K562 (cell line): ENCODE measurements at regions of chr16 and their contacts with region 1.

Region 1: GRCh38 chr16:1331712-1332617 is 1.5 kb upstream of the BAIAP3 start:
- DNase-seq: peak; percentile 74 to 91 (median 82)
- ATAC-seq: peak; percentile 81
- H3K4me3 ChIP-seq: peak overlapping the region; percentile 31
- H3K27ac ChIP-seq: peak overlapping the region; percentile 90
- H3K4me1 ChIP-seq: peaks cover 17 to 74% of the 10 kb centered on the region in 2 experiments
- H3K27me3 ChIP-seq: peaks cover 6 to 19% of the 10 kb centered on the region in 2 experiments; a peak in 3 of 5 replicates
- CTCF ChIP-seq: no peak
- EP300 ChIP-seq: peak; percentile 41
- POLR2A ChIP-seq: peak; percentile 70
- RAD21 ChIP-seq: no peak

Region 2: DNA sequence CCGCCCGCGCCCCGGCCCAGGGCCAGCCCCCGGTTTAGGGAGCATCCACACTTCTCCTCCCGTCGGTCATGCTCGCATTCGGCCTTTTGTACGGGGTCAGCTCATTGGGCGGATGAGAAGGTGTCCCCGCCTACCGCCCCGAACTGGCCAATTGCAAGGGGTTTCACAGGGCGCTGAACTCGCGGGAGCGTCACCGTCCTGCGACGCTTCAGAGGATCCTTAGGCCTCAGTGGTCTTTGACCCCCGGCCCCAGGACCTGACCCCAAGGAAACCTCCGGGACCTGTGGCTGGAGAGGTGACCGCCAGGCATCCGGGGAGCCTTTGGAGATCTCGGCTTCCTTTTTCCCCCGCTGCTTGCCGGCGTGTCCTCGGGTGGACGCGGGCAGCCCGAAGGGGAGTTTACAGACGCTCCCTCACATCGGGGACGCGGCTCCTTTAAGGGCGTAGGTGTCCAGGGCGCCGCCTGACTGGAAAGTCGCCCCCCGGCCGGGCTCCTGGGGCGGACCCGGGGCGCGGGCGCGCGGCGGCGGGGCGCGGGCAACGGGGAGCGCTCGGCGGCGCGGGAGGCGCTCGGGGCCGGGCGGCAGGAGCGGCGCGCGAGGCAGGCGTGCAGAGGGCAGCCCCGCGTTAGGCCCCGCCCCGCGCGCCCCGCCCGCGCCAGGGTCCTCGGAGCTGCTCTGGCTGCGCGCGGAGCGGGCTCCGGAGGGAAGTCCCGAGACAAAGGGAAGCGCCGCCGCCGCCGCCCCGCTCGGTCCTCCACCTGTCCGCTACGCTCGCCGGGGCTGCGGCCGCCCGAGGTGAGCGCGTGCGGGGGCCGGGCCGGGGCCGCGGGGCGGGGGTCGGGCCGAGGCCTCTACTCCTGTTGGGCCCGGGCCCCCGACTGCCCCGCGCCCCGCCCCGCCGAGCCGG is 22.7 kb before region 1 on chr16 and contains the start of gene UBE2I:
- CTCF ChIA-PET with region 1: no interaction called
- POLR2A ChIA-PET with region 1: interaction called, 15 read pairs
- in situ Hi-C with region 1: no loop called
- intact Hi-C with region 1: loop called (anchors 2 kb)
- DNase-seq: peak; percentile 75 to 98 (median 88)
- ATAC-seq: peak; percentile 84
- H3K4me3 ChIP-seq: peak within 1 kb of the TSS; percentile 91
- H3K27ac ChIP-seq: peak within 1 kb of the TSS; percentile 100
- H3K4me1 ChIP-seq: peaks cover 12 to 64% of the 10 kb centered on the region in 2 experiments
- H3K27me3 ChIP-seq: no peaks in the 10 kb centered on the region
- CTCF ChIP-seq: no peak
- EP300 ChIP-seq: no peak
- POLR2A ChIP-seq: no peak
- RAD21 ChIP-seq: no peak
- polyA plus RNA-seq, gene UBE2I: 36.6 to 45.1 TPM